ENCODE measurements at regions of chr11 and their contacts with region 1.

Region 1: GRCh38 chr11:77994412-77995362 is at the start of gene INTS4:
- DNase-seq: peak; percentile 100
- H3K4me3 ChIP-seq: peak within 1 kb of the TSS; percentile 71
- H3K4me1 ChIP-seq: peaks cover 15% of the 10 kb centered on the region
- H3K27me3 ChIP-seq: no peaks in the 10 kb centered on the region

Region 2: DNA sequence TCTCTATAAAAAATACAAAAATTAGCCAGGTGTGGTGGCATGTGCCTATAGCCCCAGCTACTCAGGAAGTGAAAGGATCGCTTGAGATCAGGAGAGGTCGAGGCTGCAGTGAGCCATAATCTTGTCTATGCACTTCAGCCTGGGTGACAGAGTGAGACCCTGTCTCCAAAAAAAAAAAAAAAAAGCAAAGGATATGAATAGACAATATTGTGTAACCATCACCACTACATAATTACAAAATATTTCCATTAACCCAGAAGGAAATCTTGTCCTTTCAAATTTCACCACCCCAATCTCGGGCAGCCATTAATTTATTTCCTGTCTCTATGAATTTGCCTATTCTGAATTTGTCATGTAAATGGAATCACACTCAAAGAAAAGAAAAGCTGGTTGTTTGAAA is 195.3 kb before region 1 on chr11:
- in situ Hi-C with region 1: no loop called
- DNase-seq: no peak
- H3K4me3 ChIP-seq: no peak overlapping the region
- H3K4me1 ChIP-seq: no peaks in the 10 kb centered on the region
- H3K27me3 ChIP-seq: no peaks in the 10 kb centered on the region

Region 3: GRCh38 chr11:78039919-78040671 is 45.4 kb after region 1 on chr11:
- in situ Hi-C with region 1: no loop called
- DNase-seq: peak in 1 of 2 experiments; percentile 70
- H3K4me3 ChIP-seq: no peak overlapping the region
- H3K4me1 ChIP-seq: no peaks in the 10 kb centered on the region
- H3K27me3 ChIP-seq: no peaks in the 10 kb centered on the region

Region 4: DNA sequence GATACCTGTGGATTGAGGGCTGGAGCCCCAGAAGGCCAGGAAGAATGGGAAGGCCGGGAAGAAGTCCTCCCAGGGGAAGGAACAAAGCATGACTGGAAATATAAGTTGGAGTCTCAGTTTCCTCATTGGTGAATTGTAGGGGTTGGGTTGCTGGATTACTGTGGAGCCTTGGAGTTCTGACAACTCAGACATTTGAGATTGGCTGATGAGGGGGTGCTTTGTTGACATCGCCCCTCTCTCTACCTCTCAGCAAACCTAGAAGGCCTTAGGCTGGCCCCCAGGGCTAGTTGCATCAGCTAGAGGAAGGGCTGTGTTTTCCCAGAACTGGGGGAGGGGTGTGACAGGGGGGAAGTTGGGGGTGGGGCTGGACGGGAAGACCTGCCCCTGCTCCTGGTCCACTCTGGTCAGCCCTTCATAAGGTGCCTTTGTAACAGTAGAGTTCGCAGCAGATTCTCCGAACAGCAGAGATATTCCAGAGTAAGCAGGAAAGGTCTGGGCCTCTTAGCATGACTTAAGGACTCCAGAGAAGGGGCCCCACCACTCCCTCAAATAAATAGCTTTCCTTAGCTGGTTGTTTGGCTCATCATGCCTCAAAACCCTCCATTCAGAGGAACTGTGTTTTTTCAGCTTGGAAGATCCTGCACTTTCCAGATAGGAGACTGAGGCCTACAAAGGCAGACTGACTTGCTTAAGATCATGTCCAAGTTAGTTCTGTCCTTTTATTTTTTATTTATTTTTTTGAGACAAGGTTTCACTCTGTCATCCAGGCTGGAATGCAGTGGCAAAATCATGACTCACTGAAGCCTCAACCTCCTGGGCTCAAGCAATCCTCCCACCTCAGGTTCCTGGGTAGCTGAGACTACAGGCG is 56.5 kb after region 1 on chr11:
- in situ Hi-C with region 1: loop called (anchors 10 kb)
- DNase-seq: no peak
- H3K4me3 ChIP-seq: no peak overlapping the region
- H3K4me1 ChIP-seq: peaks cover 4% of the 10 kb centered on the region; the same call in 1 of the 2 replicates
- H3K27me3 ChIP-seq: no peaks in the 10 kb centered on the region